ENCODE measurements at regions of chr16 and their contacts with region 1.

Region 1: DNA sequence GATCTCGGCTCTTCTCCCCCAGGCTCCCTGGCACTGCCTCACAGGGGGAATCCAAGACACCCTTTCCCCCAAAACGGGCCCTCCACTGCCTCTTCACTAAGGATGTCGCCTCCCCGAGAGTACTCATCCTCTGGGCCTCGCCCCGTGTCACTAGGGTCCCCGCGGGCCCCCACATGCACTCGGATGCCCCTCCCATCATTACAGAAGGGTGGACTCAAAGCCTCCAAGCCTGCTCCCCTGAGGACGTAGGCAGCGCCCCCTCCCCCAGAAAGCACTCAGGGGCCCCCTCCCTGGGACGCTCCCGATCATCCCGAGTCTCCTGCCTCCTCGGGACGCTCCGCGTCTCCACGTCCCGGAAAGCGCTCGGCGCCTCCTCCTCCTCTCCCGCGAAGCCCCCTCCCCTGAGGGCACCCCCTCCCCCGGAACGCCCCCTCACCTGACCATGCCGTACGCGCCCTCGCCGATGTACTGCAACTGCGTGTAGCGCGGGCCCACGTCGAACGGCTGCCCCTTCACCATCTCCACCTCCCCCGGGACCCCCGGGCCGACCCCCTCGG is 338 bp downstream of the MAPK3 start:
- DNase-seq: peak in 3 of 7 donors; percentile 16 to 37 (median 29)
- H3K4me3 ChIP-seq: peak overlapping the region in 3 of 4 donors; percentile 35 to 91 (median 64)
- H3K27ac ChIP-seq: peak overlapping the region in 4 of 5 donors; percentile 71 to 95 (median 90)
- H3K4me1 ChIP-seq: peaks cover 7 to 26% of the 10 kb centered on the region in 2 donors
- H3K27me3 ChIP-seq: no peaks in the 10 kb centered on the region
- CTCF ChIP-seq: no peak
- POLR2A ChIP-seq: no peak

Region 2: DNA sequence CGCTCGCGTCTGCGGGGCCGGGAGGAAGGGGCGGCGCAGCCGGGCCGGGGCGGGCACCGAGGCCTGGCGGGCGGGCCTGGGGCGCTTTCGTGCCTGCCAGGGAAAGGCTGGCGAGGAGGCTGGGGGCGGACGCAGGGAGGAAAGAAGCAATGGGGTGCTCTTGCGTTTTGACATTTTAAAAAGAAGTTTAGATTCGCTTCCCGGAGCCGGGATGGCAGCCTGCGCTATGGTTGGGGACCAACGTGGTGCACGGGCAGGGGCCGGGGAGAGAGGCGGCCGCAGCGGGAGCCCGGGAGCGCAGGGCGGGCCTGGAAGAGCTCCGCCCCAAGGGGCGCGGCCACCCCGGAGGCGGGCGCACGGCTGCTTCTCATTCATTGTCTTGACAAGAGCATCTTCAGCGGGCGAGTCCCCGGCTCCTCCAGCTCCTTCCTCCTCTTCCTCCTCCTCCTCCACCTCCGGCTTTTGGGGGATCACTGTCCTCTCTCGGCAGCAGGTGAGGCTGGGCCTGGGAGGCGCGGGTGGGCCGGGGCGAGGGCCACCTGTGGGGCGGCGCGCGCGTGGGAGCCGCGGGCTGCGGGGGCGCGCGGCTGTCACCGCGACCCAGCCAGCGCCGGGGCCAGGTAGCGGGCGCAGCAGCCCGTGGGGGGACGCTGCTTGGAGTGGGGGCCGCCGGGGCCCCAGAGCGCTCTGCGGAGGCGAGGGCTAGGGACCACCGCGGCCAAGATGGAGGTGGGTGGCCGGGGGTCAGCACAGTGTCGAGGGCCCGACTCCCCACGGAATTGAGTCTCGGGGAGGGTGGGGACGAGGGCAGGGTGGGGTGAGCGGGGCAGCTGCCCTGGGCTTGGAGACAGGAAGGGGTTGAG is 60.8 kb after region 1 on chr16 and contains the start of gene CORO1A:
- intact Hi-C with region 1: loop called in 1 of 2 experiments (anchors 10 kb)
- DNase-seq: peak; percentile 81 to 89 (median 82)
- H3K4me3 ChIP-seq: peak within 1 kb of the TSS in 2 of 4 donors; percentile 51 to 72
- H3K27ac ChIP-seq: peak within 1 kb of the TSS in 4 of 5 donors; percentile 57 to 81 (median 64)
- H3K4me1 ChIP-seq: peaks cover 0 to 3% of the 10 kb centered on the region in 2 donors
- H3K27me3 ChIP-seq: no peaks in the 10 kb centered on the region
- CTCF ChIP-seq: no peak
- POLR2A ChIP-seq: peak in 1 of 2 donors; percentile 15
- total RNA-seq, gene CORO1A: 3.3 to 69.1 (median 39.6) TPM